BJ (cell line): ENCODE measurements at regions of chr10 and their contacts with region 1.

Region 1: DNA sequence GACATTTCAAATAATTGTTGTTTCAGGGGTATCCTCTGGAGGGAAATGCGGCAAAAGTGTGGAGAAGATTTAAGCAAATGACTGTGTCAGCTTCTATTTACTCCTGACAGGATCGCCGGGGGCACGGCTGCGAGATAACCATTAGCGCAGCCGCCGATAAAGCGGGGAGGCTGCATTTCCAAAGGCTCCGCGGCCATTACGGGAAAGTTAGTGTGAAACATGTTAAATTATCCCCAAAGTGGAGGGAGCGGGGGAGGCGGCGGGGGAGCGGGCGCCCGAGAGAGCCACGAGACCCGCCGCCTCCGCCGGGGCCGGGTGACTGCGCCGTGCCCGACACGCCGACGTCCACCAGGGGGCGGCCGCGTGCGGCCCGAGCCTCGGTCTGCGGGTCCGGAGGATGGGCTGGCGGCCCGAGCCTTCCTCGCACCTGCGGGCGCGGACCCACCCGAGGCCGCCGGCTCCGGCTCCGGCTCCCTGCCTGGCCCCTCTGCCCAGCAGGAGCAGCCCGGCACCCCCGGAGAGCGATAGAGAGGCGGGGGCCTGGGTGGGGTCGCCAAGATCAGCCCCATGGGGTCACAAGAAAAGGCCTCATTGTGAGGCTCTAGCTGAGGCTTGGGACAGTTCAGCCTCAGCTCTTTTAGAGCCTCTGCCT is 74.4 kb upstream of the PAX2 start:
- DNase-seq: no peak
- H3K4me3 ChIP-seq: no peak overlapping the region
- H3K27me3 ChIP-seq: peaks cover 21% of the 10 kb centered on the region
- CTCF ChIP-seq: 0 out of 2 replicates have a peak, but pooled peaks have one; percentile 21

Region 2: DNA sequence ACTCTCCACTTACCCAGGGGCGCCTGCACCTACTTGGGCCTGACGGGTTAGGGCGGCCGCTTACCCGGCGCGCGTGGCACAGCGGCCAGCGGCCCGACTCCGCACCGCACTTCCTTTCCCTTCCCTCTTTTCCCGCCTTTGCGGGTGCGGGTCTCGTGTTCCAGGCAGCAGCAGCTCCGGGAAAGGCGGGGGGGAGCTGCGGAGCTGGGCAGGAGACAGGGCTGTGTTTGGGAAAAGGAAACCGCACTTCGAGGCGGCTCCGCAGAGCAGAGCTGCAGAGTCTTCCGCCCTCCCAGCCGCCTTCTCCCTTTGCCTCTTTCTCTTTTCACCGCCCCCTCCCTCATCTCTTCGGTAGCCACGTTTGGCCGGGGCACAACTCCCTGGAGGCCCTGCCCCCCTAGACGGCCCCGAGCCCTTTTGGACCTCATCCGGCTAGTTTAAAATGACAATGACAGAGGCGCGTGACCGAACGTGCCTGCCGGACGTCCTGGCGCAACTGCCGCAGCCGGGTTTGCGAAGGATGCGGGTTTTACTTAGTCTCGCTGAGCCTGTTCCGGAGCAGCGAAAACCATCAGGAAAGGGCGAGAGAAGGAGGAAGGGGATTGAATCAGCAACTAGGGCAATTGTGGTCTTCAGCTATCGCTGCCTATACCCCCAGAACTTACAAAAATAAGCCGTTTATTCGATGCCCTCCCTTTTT is 66.6 kb after region 1 on chr10:
- CTCF ChIA-PET with region 1: no interaction called
- POLR2A ChIA-PET with region 1: no interaction called
- DNase-seq: no peak
- H3K4me3 ChIP-seq: no peak overlapping the region
- H3K27me3 ChIP-seq: peaks cover 68% of the 10 kb centered on the region
- CTCF ChIP-seq: no peak

Region 3: DNA sequence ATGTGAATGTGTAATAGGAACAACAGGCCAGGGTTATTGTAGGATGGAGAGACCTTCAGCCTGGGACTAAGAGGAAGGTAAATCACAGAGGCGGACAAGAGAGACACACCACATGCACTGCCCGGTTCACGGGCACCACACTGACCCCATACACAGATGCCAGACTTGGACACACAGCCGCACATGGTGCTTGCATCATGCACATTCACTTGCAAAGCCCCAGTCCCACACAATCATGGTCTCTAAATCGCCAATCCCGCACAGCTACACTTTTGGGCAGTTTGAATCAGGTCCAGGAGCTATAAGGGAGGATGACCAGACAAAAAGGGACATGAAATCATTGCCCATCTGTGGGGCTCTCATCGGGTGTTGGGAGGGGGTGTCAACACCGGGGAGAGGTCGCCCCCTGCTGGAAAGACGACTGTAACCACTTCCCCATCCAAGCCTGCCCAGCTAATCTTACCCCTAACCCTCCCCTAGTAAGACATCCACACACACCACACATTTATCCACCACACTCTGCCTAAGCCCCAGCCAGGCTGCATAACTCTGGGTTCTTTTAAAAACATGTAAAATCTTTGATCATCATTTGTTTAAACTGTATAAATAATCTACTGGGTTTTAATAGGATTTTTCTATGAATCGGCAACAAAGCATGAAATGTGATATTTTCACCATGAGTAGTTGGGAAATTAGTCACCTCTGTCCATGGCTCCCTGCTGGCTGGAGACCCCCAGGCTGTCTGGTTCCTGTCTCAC is 201.3 kb after region 1 on chr10:
- CTCF ChIA-PET with region 1: interaction called, 15 read pairs
- POLR2A ChIA-PET with region 1: no interaction called
- DNase-seq: no peak
- H3K4me3 ChIP-seq: no peak overlapping the region
- H3K27me3 ChIP-seq: peaks cover 1% of the 10 kb centered on the region
- CTCF ChIP-seq: peak; percentile 63

Region 4: GRCh38 chr10:100986952-100987750 is 316.2 kb after region 1 on chr10 and contains the starts of genes MRPL43 and TWNK:
- CTCF ChIA-PET with region 1: no interaction called
- POLR2A ChIA-PET with region 1: no interaction called
- DNase-seq: no peak
- H3K4me3 ChIP-seq: peak within 1 kb of the TSS; percentile 95
- H3K27me3 ChIP-seq: no peaks in the 10 kb centered on the region
- CTCF ChIP-seq: no peak
- polyA plus RNA-seq, gene MRPL43: 77.3 and 123 TPM in 2 replicates
- polyA plus RNA-seq, gene TWNK: 4.7 and 5.5 TPM in 2 replicates